AG04450 (cell line): ENCODE measurements at regions of chr17 and their contacts with region 1.

Region 1: DNA sequence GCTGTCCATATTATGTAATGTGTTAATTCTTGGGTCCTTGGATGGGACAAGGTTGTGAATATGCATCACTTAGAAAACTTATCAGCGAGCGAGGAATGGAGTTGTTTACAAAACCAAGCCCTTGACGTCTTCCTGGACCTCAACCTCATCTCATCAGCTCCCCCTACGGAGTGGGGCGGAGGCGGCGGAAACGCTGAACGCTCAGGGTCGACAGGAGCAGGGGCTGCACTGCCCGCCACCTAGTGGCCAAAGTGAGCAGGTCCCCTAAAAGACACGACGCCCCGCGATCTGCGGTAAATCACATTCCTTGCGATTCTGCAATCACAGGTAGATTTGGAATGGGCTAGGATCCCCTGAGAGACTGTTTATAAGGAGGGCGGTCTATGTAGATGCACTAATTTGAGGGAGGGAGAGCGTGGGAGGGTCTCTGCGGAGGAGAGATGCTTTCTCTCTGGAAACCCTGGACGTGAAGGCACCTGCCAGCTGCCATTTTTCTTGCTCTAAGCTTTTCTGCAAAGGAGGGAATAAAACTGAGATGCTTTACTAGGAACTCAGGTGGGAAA is 5.4 kb upstream of the ICAM2 start:
- DNase-seq: peak; percentile 33
- H3K4me3 ChIP-seq: no peak overlapping the region
- H3K27ac ChIP-seq: no peak overlapping the region
- H3K27me3 ChIP-seq: peaks cover 2% of the 10 kb centered on the region
- CTCF ChIP-seq: peak; percentile 93

Region 2: DNA sequence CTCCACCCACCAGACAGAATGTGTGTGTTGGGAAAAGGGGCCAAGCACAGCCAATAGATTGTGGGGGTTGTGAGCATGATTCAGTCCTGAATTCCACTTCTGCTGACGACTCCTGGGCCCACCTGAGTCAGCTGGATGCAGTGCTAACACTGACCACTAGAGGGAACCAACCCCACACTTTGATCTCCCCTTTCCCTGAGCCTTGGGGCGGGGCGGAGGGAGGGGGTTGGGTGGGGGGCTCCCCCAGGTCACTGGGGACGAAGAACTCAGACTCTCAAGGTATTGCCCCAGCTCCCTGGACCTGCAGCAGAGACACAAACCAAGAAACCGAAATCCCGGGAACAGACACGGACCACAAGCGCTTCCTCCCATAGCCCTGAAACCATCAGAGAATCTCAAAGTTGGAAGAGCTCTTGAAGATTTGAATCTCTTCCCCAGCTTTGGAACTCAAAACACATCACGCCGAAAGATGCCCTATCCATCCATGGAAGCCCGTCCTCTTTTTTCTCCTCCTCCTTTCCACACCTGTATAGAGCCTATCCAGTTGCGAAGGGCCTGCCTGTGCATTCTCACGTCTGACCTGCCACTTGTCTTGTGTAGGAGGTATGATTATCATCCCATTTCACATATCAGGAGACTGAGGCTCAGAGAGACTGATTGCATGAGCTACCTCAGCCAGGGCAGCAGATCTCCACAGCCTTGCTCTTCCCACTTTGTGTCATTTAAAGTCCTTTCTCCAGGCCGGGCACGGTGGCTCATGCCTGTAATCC is 114.0 kb before region 1 on chr17:
- CTCF ChIA-PET with region 1: interaction called, 19 read pairs
- POLR2A ChIA-PET with region 1: no interaction called
- DNase-seq: no peak
- H3K4me3 ChIP-seq: no peak overlapping the region
- H3K27ac ChIP-seq: no peak overlapping the region
- H3K27me3 ChIP-seq: peaks cover 32% of the 10 kb centered on the region
- CTCF ChIP-seq: peak; percentile 66

Region 3: GRCh38 chr17:64041912-64042311 is 16.1 kb after region 1 on chr17:
- CTCF ChIA-PET with region 1: interaction called, 18 read pairs
- POLR2A ChIA-PET with region 1: interaction called, 7 read pairs
- DNase-seq: no peak
- H3K4me3 ChIP-seq: no peak overlapping the region
- H3K27ac ChIP-seq: no peak overlapping the region
- H3K27me3 ChIP-seq: no peaks in the 10 kb centered on the region
- CTCF ChIP-seq: no peak

Region 4: DNA sequence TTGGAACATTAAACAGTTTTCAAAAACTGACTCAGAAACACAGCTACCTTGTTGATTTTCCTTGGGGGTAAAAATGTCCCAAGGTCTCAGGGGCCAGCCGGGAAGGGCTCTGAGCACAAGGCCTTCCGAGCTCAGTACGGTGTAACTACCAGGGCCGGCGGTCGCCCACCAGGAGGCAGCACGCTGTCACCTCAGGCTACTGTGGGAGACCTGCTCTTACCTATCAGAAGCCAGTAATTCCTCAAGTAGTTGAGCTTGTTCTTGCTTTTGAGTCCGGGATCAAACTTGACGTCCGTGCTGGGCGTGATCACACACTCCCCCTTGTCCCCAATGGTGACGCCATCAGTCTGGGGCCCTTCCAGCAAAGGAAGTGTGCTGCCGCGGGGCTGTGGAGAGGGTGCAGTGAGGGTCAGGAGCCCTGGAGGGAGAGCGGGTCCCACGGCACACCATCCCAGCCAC is 38.0 kb after region 1 on chr17:
- CTCF ChIA-PET with region 1: interaction called, 21 read pairs
- POLR2A ChIA-PET with region 1: no interaction called
- DNase-seq: no peak
- H3K4me3 ChIP-seq: no peak overlapping the region
- H3K27ac ChIP-seq: no peak overlapping the region
- H3K27me3 ChIP-seq: no peaks in the 10 kb centered on the region
- CTCF ChIP-seq: peak; percentile 46; the same call in 1 of the 2 replicates

Region 5: DNA sequence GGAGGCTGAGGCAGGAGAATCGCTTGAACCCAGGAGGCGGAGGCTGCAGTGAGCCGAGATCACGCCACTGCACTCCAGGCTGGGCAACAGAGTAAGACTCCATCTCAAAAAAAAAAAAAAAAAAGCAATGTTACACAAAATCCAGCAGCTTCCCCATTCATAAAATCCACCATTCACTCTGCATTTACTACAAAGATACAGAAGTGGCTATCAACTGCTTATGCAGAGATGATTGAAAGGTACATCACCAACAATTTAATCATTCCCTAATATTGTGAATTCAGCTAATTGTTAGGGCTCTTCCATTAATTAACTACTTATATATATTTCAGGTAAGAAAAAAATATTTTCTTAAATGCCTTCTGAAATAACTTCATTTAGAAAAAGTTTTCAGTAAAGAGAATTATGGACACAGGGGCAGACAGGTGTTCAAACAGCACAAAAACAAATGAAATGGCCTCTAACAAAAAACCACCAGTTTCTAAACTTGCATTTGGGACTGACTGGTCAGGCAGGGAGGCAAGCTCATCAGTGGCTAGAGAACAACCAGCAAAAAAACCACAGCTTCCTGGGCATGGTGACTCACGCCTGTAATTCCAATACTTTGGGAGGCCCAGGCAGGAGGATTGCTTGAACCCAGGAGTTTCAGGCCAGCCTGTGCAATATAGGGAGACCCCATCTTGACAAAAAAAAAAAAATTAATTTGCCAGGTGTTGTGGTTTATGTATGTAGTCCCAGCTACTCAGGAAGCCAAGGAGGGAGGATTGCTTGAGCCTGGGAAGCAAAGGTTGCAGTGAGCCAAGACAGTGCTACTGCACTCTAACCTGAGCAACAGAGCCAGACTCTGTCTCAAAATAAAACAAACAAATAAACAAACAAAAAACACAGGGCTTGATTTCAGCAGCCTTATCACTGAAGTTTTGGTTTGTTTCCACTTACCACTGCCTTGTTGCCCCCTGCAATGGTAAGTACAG is 77.9 kb after region 1 on chr17:
- CTCF ChIA-PET with region 1: interaction called, 12 read pairs
- POLR2A ChIA-PET with region 1: no interaction called
- DNase-seq: no peak
- H3K4me3 ChIP-seq: no peak overlapping the region
- H3K27ac ChIP-seq: no peak overlapping the region
- H3K27me3 ChIP-seq: no peaks in the 10 kb centered on the region
- CTCF ChIP-seq: no peak

Region 6: GRCh38 chr17:64281962-64282727 is 256.3 kb after region 1 on chr17:
- CTCF ChIA-PET with region 1: interaction called, 25 read pairs
- POLR2A ChIA-PET with region 1: no interaction called
- DNase-seq: peak; percentile 61
- H3K4me3 ChIP-seq: no peak overlapping the region
- H3K27ac ChIP-seq: no peak overlapping the region
- H3K27me3 ChIP-seq: peaks cover 5% of the 10 kb centered on the region
- CTCF ChIP-seq: peak; percentile 84